A673 (cell line): ENCODE measurements at regions of chr17 and their contacts with region 1.

Region 1: DNA sequence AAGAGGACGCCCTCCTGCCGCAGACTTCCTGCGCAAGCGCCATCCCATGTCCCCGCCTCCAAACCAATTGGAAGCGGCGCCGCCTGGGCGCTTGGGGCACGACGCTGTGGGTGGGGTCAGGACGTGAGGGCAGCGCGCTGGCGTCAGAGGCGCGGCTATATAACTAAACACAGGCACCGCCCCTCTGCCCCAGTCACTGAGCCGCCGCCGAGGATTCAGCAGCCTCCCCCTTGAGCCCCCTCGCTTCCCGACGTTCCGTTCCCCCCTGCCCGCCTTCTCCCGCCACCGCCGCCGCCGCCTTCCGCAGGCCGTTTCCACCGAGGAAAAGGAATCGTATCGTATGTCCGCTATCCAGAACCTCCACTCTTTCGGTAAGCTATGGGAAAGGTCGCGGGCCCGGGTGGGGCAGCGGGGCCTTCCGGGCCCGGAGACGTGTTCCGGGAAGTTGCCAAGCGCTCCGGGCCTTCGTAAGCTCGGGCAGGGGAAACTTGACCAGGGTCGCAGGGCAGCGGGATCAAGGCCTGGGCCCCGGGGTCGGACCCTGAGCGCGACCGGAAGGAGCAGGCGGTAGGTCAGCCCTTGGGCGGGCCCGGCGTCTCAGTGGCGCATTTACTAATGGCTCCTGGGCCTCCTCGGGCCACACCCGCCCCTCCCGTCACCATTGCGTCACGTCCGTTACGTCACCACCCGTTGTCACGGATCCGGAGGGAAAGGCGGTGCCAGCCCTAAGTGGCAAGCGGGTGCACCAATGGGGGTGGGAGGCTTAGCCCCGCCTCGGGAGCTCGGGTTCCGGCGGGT is at the start of gene EIF1:
- DNase-seq: peak; percentile 98
- H3K4me3 ChIP-seq: peak within 1 kb of the TSS; percentile 86
- H3K27ac ChIP-seq: peak within 1 kb of the TSS; percentile 100
- H3K4me1 ChIP-seq: peaks cover 13% of the 10 kb centered on the region
- H3K27me3 ChIP-seq: no peaks in the 10 kb centered on the region
- CTCF ChIP-seq: no peak
- total RNA-seq, gene EIF1: 504 and 524 TPM in 2 replicates

Region 2: DNA sequence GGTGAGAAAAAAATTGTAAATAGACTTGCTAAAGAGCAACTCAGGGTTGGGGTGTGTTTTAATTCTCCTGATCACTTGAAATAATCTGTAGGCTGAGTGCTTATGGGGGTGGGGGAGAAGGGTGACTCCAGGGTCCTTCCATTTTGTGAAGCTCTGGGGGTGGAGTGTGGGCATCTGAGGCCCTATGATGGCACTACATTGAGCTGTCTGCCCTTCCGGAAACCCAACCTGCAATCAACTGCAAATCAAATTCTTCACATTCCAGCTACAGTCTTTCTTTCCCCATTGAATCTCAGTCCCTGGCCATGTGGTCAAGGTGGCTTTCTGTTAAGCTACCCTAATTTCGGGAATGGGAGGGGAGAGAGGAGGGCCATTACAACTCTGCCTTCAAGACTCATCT is 1407.2 kb before region 1 on chr17:
- CTCF ChIA-PET with region 1: no interaction called
- POLR2A ChIA-PET with region 1: interaction called, 10 read pairs
- intact Hi-C with region 1: no loop called
- DNase-seq: no peak
- H3K4me3 ChIP-seq: no peak overlapping the region
- H3K27ac ChIP-seq: no peak overlapping the region
- H3K4me1 ChIP-seq: no peaks in the 10 kb centered on the region
- H3K27me3 ChIP-seq: no peaks in the 10 kb centered on the region
- CTCF ChIP-seq: no peak

Region 3: GRCh38 chr17:41678411-41678906 is 10.4 kb before region 1 on chr17:
- CTCF ChIA-PET with region 1: interaction called, 7 read pairs
- POLR2A ChIA-PET with region 1: interaction called, 13 read pairs
- intact Hi-C with region 1: no loop called
- DNase-seq: no peak
- H3K4me3 ChIP-seq: peak overlapping the region; percentile 19
- H3K27ac ChIP-seq: peak overlapping the region; percentile 72
- H3K4me1 ChIP-seq: no peaks in the 10 kb centered on the region
- H3K27me3 ChIP-seq: no peaks in the 10 kb centered on the region
- CTCF ChIP-seq: no peak